IMR-90 (cell line): ENCODE measurements at regions of chr12 and their contacts with region 1.

Region 1: GRCh38 chr12:121579981-121580868 is 598 bp downstream of the KDM2B start:
- DNase-seq: peak; percentile 55
- ATAC-seq: peak; percentile 47
- H3K4me3 ChIP-seq: peak overlapping the region; percentile 64
- H3K27ac ChIP-seq: peak overlapping the region; percentile 91
- H3K4me1 ChIP-seq: peaks cover 26% of the 10 kb centered on the region
- H3K27me3 ChIP-seq: no peaks in the 10 kb centered on the region
- CTCF ChIP-seq: no peak
- POLR2A ChIP-seq: no peak
- RAD21 ChIP-seq: no peak

Region 2: GRCh38 chr12:120964298-120964697 is 615.9 kb before region 1 on chr12:
- CTCF ChIA-PET with region 1: no interaction called
- POLR2A ChIA-PET with region 1: interaction called, 16 read pairs
- dilution Hi-C with region 1: no loop called
- in situ Hi-C with region 1: no loop called
- intact Hi-C with region 1: no loop called
- DNase-seq: no peak
- ATAC-seq: no peak
- H3K4me3 ChIP-seq: no peak overlapping the region
- H3K27ac ChIP-seq: no peak overlapping the region
- H3K4me1 ChIP-seq: no peaks in the 10 kb centered on the region
- H3K27me3 ChIP-seq: peaks cover 15% of the 10 kb centered on the region; the same call in 1 of the 2 replicates
- CTCF ChIP-seq: no peak
- POLR2A ChIP-seq: no peak
- RAD21 ChIP-seq: no peak

Region 3: GRCh38 chr12:121550974-121551634 is 29.1 kb before region 1 on chr12:
- CTCF ChIA-PET with region 1: interaction called, 12 read pairs
- POLR2A ChIA-PET with region 1: no interaction called
- dilution Hi-C with region 1: no loop called
- in situ Hi-C with region 1: no loop called
- intact Hi-C with region 1: no loop called
- DNase-seq: no peak
- ATAC-seq: no peak
- H3K4me3 ChIP-seq: no peak overlapping the region
- H3K27ac ChIP-seq: no peak overlapping the region
- H3K4me1 ChIP-seq: no peaks in the 10 kb centered on the region
- H3K27me3 ChIP-seq: no peaks in the 10 kb centered on the region
- CTCF ChIP-seq: no peak
- POLR2A ChIP-seq: no peak
- RAD21 ChIP-seq: no peak

Region 4: GRCh38 chr12:121626087-121626852 is 46.0 kb after region 1 on chr12 and contains the start of gene ORAI1:
- CTCF ChIA-PET with region 1: interaction called, 6 read pairs
- POLR2A ChIA-PET with region 1: no interaction called
- dilution Hi-C with region 1: no loop called
- in situ Hi-C with region 1: no loop called
- intact Hi-C with region 1: loop called (anchors 5 kb)
- DNase-seq: peak; percentile 91
- ATAC-seq: peak; percentile 91
- H3K4me3 ChIP-seq: peak within 1 kb of the TSS; percentile 73
- H3K27ac ChIP-seq: peak within 1 kb of the TSS; percentile 71
- H3K4me1 ChIP-seq: peaks cover 15% of the 10 kb centered on the region
- H3K27me3 ChIP-seq: no peaks in the 10 kb centered on the region
- CTCF ChIP-seq: peak; percentile 25
- POLR2A ChIP-seq: no peak
- RAD21 ChIP-seq: no peak
- total RNA-seq, gene ORAI1: 3.9 and 4.4 TPM in 2 replicates

Region 5: GRCh38 chr12:121637231-121637914 is 57.1 kb after region 1 on chr12:
- CTCF ChIA-PET with region 1: no interaction called
- POLR2A ChIA-PET with region 1: interaction called, 11 read pairs
- dilution Hi-C with region 1: no loop called
- in situ Hi-C with region 1: no loop called
- intact Hi-C with region 1: no loop called
- DNase-seq: no peak
- ATAC-seq: no peak
- H3K4me3 ChIP-seq: no peak overlapping the region
- H3K27ac ChIP-seq: no peak overlapping the region
- H3K4me1 ChIP-seq: peaks cover 11% of the 10 kb centered on the region
- H3K27me3 ChIP-seq: no peaks in the 10 kb centered on the region
- CTCF ChIP-seq: no peak
- POLR2A ChIP-seq: no peak
- RAD21 ChIP-seq: no peak

Region 6: GRCh38 chr12:122834104-122834920 is 1254.1 kb after region 1 on chr12:
- CTCF ChIA-PET with region 1: no interaction called
- POLR2A ChIA-PET with region 1: interaction called, 19 read pairs
- dilution Hi-C with region 1: no loop called
- in situ Hi-C with region 1: no loop called
- intact Hi-C with region 1: no loop called
- DNase-seq: peak; percentile 44
- ATAC-seq: peak; percentile 52
- H3K4me3 ChIP-seq: peak overlapping the region; percentile 62
- H3K27ac ChIP-seq: peak overlapping the region; percentile 18; the same call in 1 of the 2 replicates
- H3K4me1 ChIP-seq: no peaks in the 10 kb centered on the region; the same call in 1 of the 2 replicates
- H3K27me3 ChIP-seq: peaks cover 2% of the 10 kb centered on the region; the same call in 1 of the 2 replicates
- CTCF ChIP-seq: no peak
- POLR2A ChIP-seq: no peak
- RAD21 ChIP-seq: no peak